ENCODE measurements at regions of chr16 and their contacts with region 1.

Region 1: GRCh38 chr16:68085259-68086071 is at the start of gene NFATC3:
- DNase-seq: peak; percentile 98 to 99 (median 99)
- H3K4me3 ChIP-seq: peak within 1 kb of the TSS; percentile 85 to 98 (median 91)
- H3K27ac ChIP-seq: peak within 1 kb of the TSS; percentile 70 to 87
- H3K4me1 ChIP-seq: peaks cover 26 to 74% (median 63%) of the 10 kb centered on the region in 4 experiments
- H3K27me3 ChIP-seq: no peaks in the 10 kb centered on the region

Region 2: GRCh38 chr16:68074850-68075555 is 10.5 kb before region 1 on chr16:
- CTCF ChIA-PET with region 1: interaction called, 34 read pairs
- POLR2A ChIA-PET with region 1: interaction called, 3 read pairs
- DNase-seq: peak; percentile 63 to 93 (median 93)
- H3K4me3 ChIP-seq: peak overlapping the region in 2 of 7 experiments; percentile 6 to 46
- H3K27ac ChIP-seq: no peak overlapping the region
- H3K4me1 ChIP-seq: peaks cover 9 to 78% (median 53%) of the 10 kb centered on the region in 4 experiments
- H3K27me3 ChIP-seq: no peaks in the 10 kb centered on the region

Measured in common myeloid progenitor, CD34-positive (primary cell).